Transverse colon (tissue), 4 donors: ENCODE measurements at regions of chr17 and their contacts with region 1.

Region 1: GRCh38 chr17:58112970-58113631 is 29.9 kb downstream of the DYNLL2 start:
- DNase-seq: peak; percentile 86
- H3K4me3 ChIP-seq: no peak overlapping the region
- H3K27ac ChIP-seq: no peak overlapping the region
- H3K4me1 ChIP-seq: no peaks in the 10 kb centered on the region
- H3K27me3 ChIP-seq: no peaks in the 10 kb centered on the region
- CTCF ChIP-seq: peak; percentile 91 to 95 (median 94)
- EP300 ChIP-seq: no peak
- POLR2A ChIP-seq: no peak

Region 2: DNA sequence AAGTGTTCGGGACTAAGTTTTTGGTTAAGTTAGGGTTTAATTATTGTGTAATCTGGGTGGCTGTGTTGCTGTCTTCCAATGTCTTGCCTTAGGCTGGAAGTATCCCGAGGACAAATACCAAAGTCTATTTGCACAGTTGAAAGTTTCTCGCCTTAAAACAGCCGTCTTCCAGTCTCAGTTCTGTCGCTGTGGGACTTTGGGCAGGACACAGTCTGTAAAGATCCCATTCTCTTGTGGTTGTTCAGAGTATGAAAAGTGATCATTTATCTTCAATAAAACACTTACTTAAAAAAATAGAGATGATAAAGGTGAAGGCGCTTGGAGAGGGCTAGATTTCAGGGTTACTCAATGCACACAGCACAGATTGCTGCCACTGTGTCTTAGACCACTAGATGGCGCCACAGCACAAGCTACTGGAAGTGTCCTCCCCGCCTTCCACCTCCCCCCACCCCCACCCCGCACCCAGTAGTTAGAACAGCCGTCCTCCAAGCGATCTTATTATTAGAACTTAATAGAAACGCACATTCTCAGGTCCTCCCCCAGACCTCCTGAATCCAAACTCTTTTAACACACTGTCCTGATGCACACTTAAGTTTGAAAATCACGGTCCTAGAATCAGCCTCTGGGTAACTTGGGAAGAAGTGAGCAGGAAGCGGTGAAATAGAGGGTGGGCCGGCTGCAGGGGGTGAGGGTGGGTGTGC is 982.2 kb before region 1 on chr17:
- in situ Hi-C with region 1: loop called in 1 of 4 experiments (anchors 25 kb)
- intact Hi-C with region 1: no loop called
- DNase-seq: peak; percentile 86
- H3K4me3 ChIP-seq: peak overlapping the region in 1 of 4 donors; percentile 3
- H3K27ac ChIP-seq: no peak overlapping the region
- H3K4me1 ChIP-seq: no peaks in the 10 kb centered on the region
- H3K27me3 ChIP-seq: no peaks in the 10 kb centered on the region
- CTCF ChIP-seq: peak; percentile 66 to 93 (median 90)
- EP300 ChIP-seq: no peak
- POLR2A ChIP-seq: no peak

Region 3: GRCh38 chr17:57724026-57724728 is 388.9 kb before region 1 on chr17:
- in situ Hi-C with region 1: no loop called
- intact Hi-C with region 1: no loop called
- DNase-seq: no peak
- H3K4me3 ChIP-seq: no peak overlapping the region
- H3K27ac ChIP-seq: no peak overlapping the region
- H3K4me1 ChIP-seq: no peaks in the 10 kb centered on the region
- H3K27me3 ChIP-seq: no peaks in the 10 kb centered on the region
- CTCF ChIP-seq: no peak
- EP300 ChIP-seq: no peak
- POLR2A ChIP-seq: no peak

Region 4: DNA sequence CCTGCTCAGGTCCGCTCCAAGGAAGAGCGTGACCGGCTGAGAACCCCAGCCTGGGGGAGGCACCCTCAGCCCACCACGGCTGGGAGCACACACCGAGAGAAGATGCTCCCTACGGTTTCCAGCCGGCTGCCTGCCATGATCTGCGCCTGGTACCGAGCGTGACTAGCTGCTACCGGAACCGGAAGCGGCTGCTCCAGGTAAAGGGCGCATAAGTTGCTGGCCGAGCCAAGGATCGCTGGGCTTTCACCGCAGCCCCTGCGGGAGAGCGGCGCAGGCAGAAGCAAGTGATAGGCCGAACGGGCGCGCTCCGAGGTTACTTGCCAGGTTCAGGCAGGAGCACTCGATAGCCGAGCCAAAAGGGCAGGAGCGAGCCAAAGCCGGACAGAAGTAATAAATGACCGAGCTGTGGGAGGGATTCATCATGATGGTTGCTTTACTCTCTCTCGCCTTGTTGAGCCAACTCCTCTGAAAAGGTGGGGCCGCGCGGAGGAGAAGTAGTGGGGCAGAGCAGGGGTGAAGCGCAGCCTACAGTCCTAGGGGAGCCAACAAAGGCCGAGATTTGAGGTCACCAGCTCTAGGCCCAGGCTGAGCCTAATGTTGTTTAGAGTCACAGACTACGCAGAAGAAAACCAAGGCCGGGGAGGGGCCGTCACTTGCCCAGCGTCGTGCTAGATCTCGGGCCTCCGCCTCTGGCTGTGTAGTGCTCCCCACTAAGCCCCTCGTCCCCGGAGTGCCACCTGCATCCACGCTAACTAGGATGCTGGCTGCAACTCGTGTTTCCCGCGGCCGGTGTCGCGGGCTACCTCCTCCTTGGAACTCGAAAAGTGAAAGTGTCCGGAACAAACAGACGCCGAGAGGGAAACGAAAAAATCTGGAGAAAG is 263.0 kb before region 1 on chr17 and contains the start of gene MRPS23:
- in situ Hi-C with region 1: loop called in 3 of 4 experiments (anchors 5 to 25 kb)
- intact Hi-C with region 1: no loop called
- DNase-seq: peak; percentile 98
- H3K4me3 ChIP-seq: peak within 1 kb of the TSS; percentile 61 to 92 (median 72)
- H3K27ac ChIP-seq: peak within 1 kb of the TSS; percentile 90 to 95 (median 92)
- H3K4me1 ChIP-seq: peaks cover 15 to 36% (median 24%) of the 10 kb centered on the region in 4 donors
- H3K27me3 ChIP-seq: no peaks in the 10 kb centered on the region
- CTCF ChIP-seq: peak in 2 of 5 experiments; percentile 7 to 17
- EP300 ChIP-seq: no peak
- POLR2A ChIP-seq: peak; percentile 85
- total RNA-seq, gene MRPS23: 0.37 to 11.1 (median 6.5) TPM

Region 5: DNA sequence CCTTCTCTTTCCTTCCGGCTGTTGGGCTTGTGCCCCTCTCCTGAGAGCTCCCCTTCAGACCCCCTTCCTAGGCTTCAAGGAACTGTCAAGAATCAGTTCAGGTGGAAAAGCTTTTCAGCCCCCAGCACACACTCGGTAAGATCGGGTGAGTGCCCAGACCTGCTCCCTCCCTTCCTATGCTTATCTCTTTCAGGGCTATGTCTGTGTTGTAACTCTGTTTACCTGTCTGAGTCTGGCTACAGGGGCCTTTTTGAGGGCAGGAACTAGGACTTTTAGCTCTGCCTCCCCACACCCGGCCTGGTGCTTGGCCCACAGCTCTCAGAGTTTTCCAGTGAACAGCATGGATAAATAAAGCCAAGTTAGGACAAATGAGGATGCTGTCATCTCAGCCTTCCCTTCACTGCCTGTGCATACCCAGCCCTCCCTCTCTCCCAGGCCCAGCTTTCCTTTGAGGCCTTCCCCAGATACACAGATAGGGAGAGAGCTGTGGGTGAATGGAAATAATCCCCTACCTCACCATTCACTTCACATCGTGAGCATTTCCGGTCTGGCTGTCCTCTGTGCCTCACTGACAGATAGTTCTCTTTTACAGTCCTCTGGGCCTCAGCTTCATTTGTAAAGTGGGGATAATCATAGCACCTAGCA is 257.6 kb before region 1 on chr17:
- in situ Hi-C with region 1: loop called in 3 of 4 experiments (anchors 5 to 25 kb)
- intact Hi-C with region 1: no loop called
- DNase-seq: no peak
- H3K4me3 ChIP-seq: no peak overlapping the region
- H3K27ac ChIP-seq: peak overlapping the region in 2 of 4 donors; percentile 31 to 90
- H3K4me1 ChIP-seq: peaks cover 12 to 39% (median 21%) of the 10 kb centered on the region in 4 donors
- H3K27me3 ChIP-seq: no peaks in the 10 kb centered on the region
- CTCF ChIP-seq: no peak
- EP300 ChIP-seq: no peak
- POLR2A ChIP-seq: no peak

Region 6: GRCh38 chr17:58006924-58007780 is 105.9 kb before region 1 on chr17 and contains the start of gene SRSF1:
- in situ Hi-C with region 1: loop called in 2 of 4 experiments (anchors 10 kb)
- intact Hi-C with region 1: loop called (anchors 10 kb)
- DNase-seq: peak; percentile 98
- H3K4me3 ChIP-seq: peak within 1 kb of the TSS; percentile 63 to 82 (median 74)
- H3K27ac ChIP-seq: peak within 1 kb of the TSS; percentile 96 to 98 (median 96)
- H3K4me1 ChIP-seq: peaks cover 18 to 48% (median 38%) of the 10 kb centered on the region in 4 donors
- H3K27me3 ChIP-seq: no peaks in the 10 kb centered on the region
- CTCF ChIP-seq: no peak
- EP300 ChIP-seq: peak; percentile 20
- POLR2A ChIP-seq: peak; percentile 95
- total RNA-seq, gene SRSF1: 122 to 174 (median 143) TPM

Region 7: GRCh38 chr17:58019039-58019438 is 94.1 kb before region 1 on chr17:
- in situ Hi-C with region 1: loop called in 2 of 4 experiments (anchors 10 kb)
- intact Hi-C with region 1: no loop called
- DNase-seq: no peak
- H3K4me3 ChIP-seq: no peak overlapping the region
- H3K27ac ChIP-seq: no peak overlapping the region
- H3K4me1 ChIP-seq: no peaks in the 10 kb centered on the region
- H3K27me3 ChIP-seq: no peaks in the 10 kb centered on the region
- CTCF ChIP-seq: no peak
- EP300 ChIP-seq: no peak
- POLR2A ChIP-seq: no peak